Activated naive CD4-positive, alpha-beta T cell treated with anti-CD3 and anti-CD28 coated beads, Interleukin-2, amount 10 ng/mL, durations not matched to agents 7 days and 5 days (primary cell): ENCODE measurements at regions of chr6 and their contacts with region 1.

Region 1: GRCh38 chr6:116126032-116126431 is at the start of gene COL10A1:
- DNase-seq: no peak
- H3K4me3 Mint-ChIP-seq: no peak within 1 kb of the TSS
- H3K27ac Mint-ChIP-seq: no peak within 1 kb of the TSS
- H3K4me1 Mint-ChIP-seq: peaks cover 7% of the 10 kb centered on the region
- H3K27me3 Mint-ChIP-seq: no peaks in the 10 kb centered on the region

Region 2: DNA sequence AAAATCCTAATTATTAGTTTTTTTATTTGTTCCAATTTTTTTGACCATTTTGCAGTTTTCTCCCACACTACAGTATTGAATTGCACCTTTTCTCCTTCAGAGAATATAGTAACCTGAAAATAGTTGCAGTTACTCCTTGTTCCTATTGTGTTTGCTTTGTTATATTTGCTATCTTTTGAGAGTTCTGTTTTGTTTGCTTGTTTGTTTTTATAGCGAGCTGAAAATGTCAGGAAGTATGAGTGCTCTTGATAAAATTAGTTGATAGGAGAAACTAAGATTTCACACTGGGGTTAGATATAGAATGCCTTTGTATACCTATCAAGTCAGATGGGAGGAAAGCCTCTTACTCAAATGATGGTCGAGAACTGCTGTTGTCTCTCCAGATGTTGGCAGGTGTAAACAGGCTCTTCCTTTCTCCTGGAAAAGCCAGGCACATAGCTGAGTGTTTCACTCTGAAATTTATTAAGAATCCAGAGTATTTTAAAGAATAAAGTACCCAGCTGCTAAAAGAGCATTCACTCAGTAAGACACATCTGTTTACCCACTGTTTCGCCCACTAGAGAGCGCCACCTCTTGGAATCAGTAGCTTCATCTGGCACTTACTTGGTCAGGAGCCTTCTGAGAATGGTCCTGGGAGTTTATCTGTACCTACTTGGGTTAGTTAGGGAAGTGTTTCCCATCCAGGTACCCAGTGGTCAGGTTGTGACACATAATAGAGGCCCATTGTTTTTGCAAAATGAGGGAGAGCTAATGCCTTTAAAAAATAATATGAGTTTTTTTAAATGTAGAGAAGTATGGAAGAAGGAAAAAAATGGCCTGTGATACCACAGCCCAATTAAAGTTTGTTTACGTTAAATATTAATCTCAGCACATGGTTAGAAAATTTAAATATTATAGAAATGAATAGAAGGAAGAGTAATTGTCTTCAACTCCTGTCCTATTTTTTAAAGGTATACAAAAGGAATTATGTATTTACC is 14.2 kb before region 1 on chr6:
- CTCF ChIA-PET with region 1: interaction called, 18 read pairs
- DNase-seq: peak; percentile 56
- H3K4me3 Mint-ChIP-seq: no peak overlapping the region
- H3K27ac Mint-ChIP-seq: no peak overlapping the region
- H3K4me1 Mint-ChIP-seq: no peaks in the 10 kb centered on the region
- H3K27me3 Mint-ChIP-seq: no peaks in the 10 kb centered on the region